Caco-2 (cell line): ENCODE measurements at regions of chr20 and their contacts with region 1.

Region 1: DNA sequence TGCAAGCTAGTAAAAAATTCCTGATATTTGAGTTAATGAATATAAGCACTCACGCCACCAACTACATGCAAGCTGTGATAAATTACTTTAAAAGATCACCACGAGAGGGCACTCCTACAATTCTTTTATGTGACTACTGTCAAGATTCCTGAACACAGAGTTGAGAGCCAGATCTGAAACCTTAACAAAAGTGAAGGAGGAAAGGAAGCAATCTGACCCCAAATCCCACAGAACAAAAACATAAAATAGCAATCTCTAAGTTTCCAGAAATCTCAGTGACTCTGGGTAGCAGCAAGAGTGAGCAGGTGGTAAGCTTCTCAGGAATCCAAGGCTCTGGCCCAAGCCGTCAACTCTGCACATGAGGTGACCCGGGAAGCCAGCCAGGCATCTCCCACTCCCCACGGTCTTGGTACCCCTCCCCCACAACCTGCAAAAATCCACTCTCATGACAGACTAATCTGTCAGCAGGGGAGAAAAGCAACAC is 55.1 kb downstream of the STAU1 start:
- DNase-seq: peak in 1 of 2 experiments; percentile 80
- H3K4me3 ChIP-seq: no peak overlapping the region
- H3K4me3 Mint-ChIP-seq: no peak overlapping the region
- H3K27ac Mint-ChIP-seq: no peak overlapping the region
- H3K4me1 ChIP-seq: 0 out of 2 replicates have a peak, but pooled peaks cover 5% of the 10 kb centered on the region
- H3K4me1 Mint-ChIP-seq: peaks cover 4% of the 10 kb centered on the region
- H3K27me3 ChIP-seq: no peaks in the 10 kb centered on the region
- H3K27me3 Mint-ChIP-seq: no peaks in the 10 kb centered on the region
- CTCF ChIP-seq: peak; percentile 73 to 77

Region 2: GRCh38 chr20:48904365-48905296 is 228.4 kb before region 1 on chr20:
- CTCF ChIA-PET with region 1: no interaction called
- POLR2A ChIA-PET with region 1: no interaction called
- intact Hi-C with region 1: no loop called
- DNase-seq: peak; percentile 75 to 86
- H3K4me3 ChIP-seq: no peak overlapping the region
- H3K4me3 Mint-ChIP-seq: no peak overlapping the region
- H3K27ac Mint-ChIP-seq: no peak overlapping the region
- H3K4me1 ChIP-seq: 0 out of 2 replicates have a peak, but pooled peaks cover 8% of the 10 kb centered on the region
- H3K4me1 Mint-ChIP-seq: peaks cover 9% of the 10 kb centered on the region
- H3K27me3 ChIP-seq: no peaks in the 10 kb centered on the region; the same call in 1 of the 2 replicates
- H3K27me3 Mint-ChIP-seq: peaks cover 15% of the 10 kb centered on the region
- CTCF ChIP-seq: peak; percentile 95 to 97

Region 3: DNA sequence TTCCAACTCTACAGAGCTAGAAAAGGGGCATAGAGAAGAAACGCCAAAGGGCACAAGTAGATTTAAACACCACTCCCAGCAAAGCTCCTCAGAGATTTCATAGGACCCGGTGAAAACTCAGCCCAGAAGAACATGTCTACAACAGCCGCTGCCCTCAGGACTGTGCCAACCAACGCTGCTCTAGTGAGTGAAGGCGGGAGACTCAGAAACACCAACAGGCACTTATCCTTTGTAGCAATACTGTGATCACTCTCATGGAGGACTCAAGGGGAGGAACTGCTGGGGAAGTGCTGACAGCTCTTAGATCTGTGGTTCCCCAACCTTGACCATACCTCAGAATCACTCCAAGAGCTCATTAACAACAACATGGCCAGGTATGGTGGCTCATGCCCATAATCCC is 15.6 kb after region 1 on chr20:
- CTCF ChIA-PET with region 1: no interaction called
- POLR2A ChIA-PET with region 1: no interaction called
- intact Hi-C with region 1: no loop called
- DNase-seq: peak in 1 of 2 experiments; percentile 36
- H3K4me3 ChIP-seq: no peak overlapping the region
- H3K4me3 Mint-ChIP-seq: no peak overlapping the region
- H3K27ac Mint-ChIP-seq: no peak overlapping the region
- H3K4me1 ChIP-seq: no peaks in the 10 kb centered on the region
- H3K4me1 Mint-ChIP-seq: no peaks in the 10 kb centered on the region
- H3K27me3 ChIP-seq: no peaks in the 10 kb centered on the region
- H3K27me3 Mint-ChIP-seq: no peaks in the 10 kb centered on the region
- CTCF ChIP-seq: no peak

Region 4: DNA sequence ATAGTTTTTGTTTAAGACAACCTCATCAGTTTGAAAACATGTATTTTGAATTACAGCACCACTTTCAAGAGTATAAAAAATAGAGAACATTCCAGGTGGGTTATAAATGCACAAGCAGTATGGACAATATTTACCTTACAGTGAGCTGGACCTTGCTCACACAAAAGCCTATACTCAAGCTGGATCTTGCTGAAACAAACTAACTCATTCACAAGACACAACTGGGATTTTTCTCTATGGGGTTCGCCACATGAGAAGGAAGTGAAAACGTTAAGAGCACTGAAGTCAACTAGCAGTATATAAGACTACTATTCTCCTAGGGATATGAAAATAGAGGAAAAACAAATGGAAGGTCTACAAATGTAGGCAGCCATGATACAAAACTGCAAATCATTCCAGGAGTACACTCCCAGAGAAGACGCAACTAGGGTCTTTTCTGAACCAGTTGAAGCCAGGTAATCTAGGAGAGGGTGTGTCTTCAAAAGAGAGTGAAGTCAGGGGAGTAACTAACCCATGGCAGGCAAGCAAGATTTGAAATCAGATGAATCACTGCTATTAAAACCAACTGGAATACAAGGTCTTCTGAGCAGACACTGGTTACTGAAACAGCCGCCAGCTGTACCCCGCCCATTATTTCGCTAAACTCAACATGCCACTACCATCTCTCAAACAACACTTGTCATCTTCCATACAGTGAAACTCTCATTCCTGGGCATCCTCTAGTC is 28.6 kb after region 1 on chr20:
- CTCF ChIA-PET with region 1: interaction called, 17 read pairs
- POLR2A ChIA-PET with region 1: no interaction called
- intact Hi-C with region 1: no loop called
- DNase-seq: no peak
- H3K4me3 ChIP-seq: no peak overlapping the region
- H3K4me3 Mint-ChIP-seq: no peak overlapping the region
- H3K27ac Mint-ChIP-seq: peak overlapping the region; percentile 72
- H3K4me1 ChIP-seq: peaks cover 11% of the 10 kb centered on the region; the same call in 1 of the 2 replicates
- H3K4me1 Mint-ChIP-seq: peaks cover 15% of the 10 kb centered on the region
- H3K27me3 ChIP-seq: no peaks in the 10 kb centered on the region
- H3K27me3 Mint-ChIP-seq: no peaks in the 10 kb centered on the region
- CTCF ChIP-seq: no peak